Activated CD4-positive, alpha-beta memory T cell treated with anti-CD3 and anti-CD28 coated beads, Interleukin-2, amount 10 ng/mL, durations not matched to agents 7 days and 5 days (primary cell): ENCODE measurements at regions of chr11 and their contacts with region 1.

Region 1: DNA sequence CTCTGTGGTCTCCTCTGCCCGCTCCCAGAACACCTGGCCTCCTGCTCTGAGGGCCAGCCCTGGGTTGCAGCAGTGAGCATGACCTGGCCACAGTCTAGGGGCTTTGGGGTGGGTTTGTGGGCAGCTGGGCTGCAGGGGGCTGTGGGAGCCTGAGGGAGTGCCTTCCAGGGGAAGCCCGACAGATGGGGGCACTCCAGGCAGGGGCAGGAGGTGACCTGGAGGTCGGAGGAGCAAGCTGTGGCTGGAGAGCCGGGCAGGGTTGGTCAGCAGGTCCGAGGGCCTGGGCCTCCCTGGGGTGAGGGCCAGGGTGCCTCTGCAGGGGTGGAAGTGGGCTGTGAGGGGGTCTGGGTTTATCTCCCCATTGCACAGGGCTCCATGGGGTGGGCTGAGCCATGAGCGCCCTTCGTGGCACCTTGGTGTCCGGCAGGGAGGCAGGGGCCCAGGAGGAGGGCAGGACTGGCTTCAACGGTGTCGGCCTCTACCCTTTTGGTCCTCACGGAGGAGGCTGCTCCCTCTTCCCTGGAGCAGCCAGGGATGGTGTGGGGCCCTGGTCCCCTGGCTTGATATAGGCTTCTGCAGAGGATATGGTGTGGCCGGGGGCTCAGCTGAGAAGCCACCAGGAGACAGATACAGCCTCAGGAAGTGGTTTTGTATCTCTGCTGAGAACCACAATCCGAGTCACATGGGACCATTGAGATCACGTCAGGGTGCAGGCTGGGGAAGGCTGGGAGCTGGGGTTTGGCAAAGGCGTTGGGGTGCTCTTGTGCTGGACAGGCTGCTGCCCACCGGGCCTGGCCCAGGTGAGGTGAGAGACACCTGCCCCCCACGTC is 22.3 kb downstream of the KCNQ1 start:
- DNase-seq: peak; percentile 81
- H3K4me3 Mint-ChIP-seq: peak overlapping the region; percentile 30
- H3K27ac Mint-ChIP-seq: no peak overlapping the region
- H3K4me1 Mint-ChIP-seq: peaks cover 27% of the 10 kb centered on the region
- H3K27me3 Mint-ChIP-seq: peaks cover 3% of the 10 kb centered on the region

Region 2: GRCh38 chr11:2444821-2445745 is 22.0 kb before region 1 on chr11 and contains the start of gene KCNQ1:
- CTCF ChIA-PET with region 1: no interaction called
- POLR2A ChIA-PET with region 1: interaction called, 10 read pairs
- DNase-seq: peak; percentile 68
- H3K4me3 Mint-ChIP-seq: peak within 1 kb of the TSS; percentile 89
- H3K27ac Mint-ChIP-seq: peak within 1 kb of the TSS; percentile 71
- H3K4me1 Mint-ChIP-seq: peaks cover 34% of the 10 kb centered on the region
- H3K27me3 Mint-ChIP-seq: peaks cover 14% of the 10 kb centered on the region
- total RNA-seq, gene KCNQ1: 14.8 to 15.0 TPM

Region 3: DNA sequence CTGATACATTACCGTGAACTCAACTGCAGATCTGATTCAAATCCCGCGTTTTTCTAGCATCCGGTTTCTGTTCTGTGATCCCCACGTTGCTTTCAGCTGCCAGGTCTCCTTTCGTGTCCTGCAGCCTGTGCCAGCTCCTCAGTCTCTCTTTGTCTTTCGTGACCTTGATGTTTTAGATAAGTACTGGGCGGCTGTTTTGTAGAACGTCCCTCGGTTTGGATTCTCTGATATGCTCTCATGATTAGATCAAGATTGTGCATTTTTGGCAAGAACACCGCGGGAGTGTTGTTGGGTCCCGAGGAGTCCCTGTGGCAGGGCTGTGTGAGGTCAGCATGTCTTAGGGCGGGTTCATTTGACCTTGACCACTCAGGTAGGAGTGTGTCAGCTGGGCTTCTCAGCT is 16.3 kb after region 1 on chr11:
- CTCF ChIA-PET with region 1: no interaction called
- POLR2A ChIA-PET with region 1: no interaction called
- DNase-seq: no peak
- H3K4me3 Mint-ChIP-seq: no peak overlapping the region
- H3K27ac Mint-ChIP-seq: no peak overlapping the region
- H3K4me1 Mint-ChIP-seq: peaks cover 13% of the 10 kb centered on the region
- H3K27me3 Mint-ChIP-seq: no peaks in the 10 kb centered on the region